Caco-2 (cell line): ENCODE measurements at regions of chr2 and their contacts with region 1.

Region 1: GRCh38 chr2:150097891-150098595 is 389.4 kb downstream of the RND3 start:
- DNase-seq: peak in 1 of 2 experiments; percentile 17
- H3K4me3 ChIP-seq: no peak overlapping the region
- H3K4me3 Mint-ChIP-seq: no peak overlapping the region
- H3K27ac Mint-ChIP-seq: peak overlapping the region; percentile 59
- H3K4me1 ChIP-seq: peaks cover 21% of the 10 kb centered on the region
- H3K4me1 Mint-ChIP-seq: peaks cover 23% of the 10 kb centered on the region
- H3K27me3 ChIP-seq: no peaks in the 10 kb centered on the region
- H3K27me3 Mint-ChIP-seq: no peaks in the 10 kb centered on the region
- CTCF ChIP-seq: peak in 1 of 2 experiments; percentile 19

Region 2: GRCh38 chr2:149989447-149990063 is 108.5 kb before region 1 on chr2:
- CTCF ChIA-PET with region 1: no interaction called
- POLR2A ChIA-PET with region 1: no interaction called
- intact Hi-C with region 1: loop called (anchors 2 kb)
- DNase-seq: peak in 1 of 2 experiments; percentile 50
- H3K4me3 ChIP-seq: no peak overlapping the region
- H3K4me3 Mint-ChIP-seq: peak overlapping the region; percentile 42
- H3K27ac Mint-ChIP-seq: peak overlapping the region; percentile 87
- H3K4me1 ChIP-seq: peaks cover 47% of the 10 kb centered on the region
- H3K4me1 Mint-ChIP-seq: peaks cover 51% of the 10 kb centered on the region
- H3K27me3 ChIP-seq: no peaks in the 10 kb centered on the region
- H3K27me3 Mint-ChIP-seq: no peaks in the 10 kb centered on the region
- CTCF ChIP-seq: no peak

Region 3: GRCh38 chr2:150212722-150213171 is 114.7 kb after region 1 on chr2:
- CTCF ChIA-PET with region 1: no interaction called
- POLR2A ChIA-PET with region 1: no interaction called
- intact Hi-C with region 1: loop called (anchors 5 kb)
- DNase-seq: no peak
- H3K4me3 ChIP-seq: no peak overlapping the region
- H3K4me3 Mint-ChIP-seq: no peak overlapping the region
- H3K27ac Mint-ChIP-seq: peak overlapping the region; percentile 43
- H3K4me1 ChIP-seq: peaks cover 48% of the 10 kb centered on the region
- H3K4me1 Mint-ChIP-seq: peaks cover 21% of the 10 kb centered on the region
- H3K27me3 ChIP-seq: no peaks in the 10 kb centered on the region
- H3K27me3 Mint-ChIP-seq: no peaks in the 10 kb centered on the region
- CTCF ChIP-seq: no peak

Region 4: DNA sequence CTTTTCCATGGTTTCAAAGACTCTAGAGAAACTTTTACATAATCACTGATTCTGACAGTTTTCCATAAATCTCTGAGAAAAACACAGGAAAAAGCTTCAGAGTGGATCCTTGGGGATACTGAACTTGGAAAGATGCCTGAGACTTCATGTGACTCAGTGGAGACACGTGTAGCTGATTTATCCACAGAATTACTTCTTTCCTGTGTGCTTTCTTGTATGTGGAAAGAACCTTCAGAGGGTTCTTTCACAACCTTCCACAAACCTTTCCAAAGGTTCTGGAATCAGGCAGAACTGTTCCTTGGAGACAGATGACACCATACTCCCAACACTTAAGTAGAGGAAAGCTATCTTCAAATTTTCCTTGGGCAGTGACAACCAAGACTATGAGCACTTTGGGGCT is 182.2 kb after region 1 on chr2:
- CTCF ChIA-PET with region 1: no interaction called
- POLR2A ChIA-PET with region 1: no interaction called
- intact Hi-C with region 1: no loop called
- DNase-seq: no peak
- H3K4me3 ChIP-seq: no peak overlapping the region
- H3K4me3 Mint-ChIP-seq: no peak overlapping the region
- H3K27ac Mint-ChIP-seq: no peak overlapping the region
- H3K4me1 ChIP-seq: no peaks in the 10 kb centered on the region
- H3K4me1 Mint-ChIP-seq: no peaks in the 10 kb centered on the region
- H3K27me3 ChIP-seq: no peaks in the 10 kb centered on the region
- H3K27me3 Mint-ChIP-seq: no peaks in the 10 kb centered on the region
- CTCF ChIP-seq: no peak

Region 5: GRCh38 chr2:150303281-150303680 is 205.2 kb after region 1 on chr2:
- CTCF ChIA-PET with region 1: no interaction called
- POLR2A ChIA-PET with region 1: no interaction called
- intact Hi-C with region 1: loop called (anchors 10 kb)
- DNase-seq: no peak
- H3K4me3 ChIP-seq: no peak overlapping the region
- H3K4me3 Mint-ChIP-seq: no peak overlapping the region
- H3K27ac Mint-ChIP-seq: no peak overlapping the region
- H3K4me1 ChIP-seq: no peaks in the 10 kb centered on the region
- H3K4me1 Mint-ChIP-seq: peaks cover under 1% of the 10 kb centered on the region
- H3K27me3 ChIP-seq: no peaks in the 10 kb centered on the region
- H3K27me3 Mint-ChIP-seq: no peaks in the 10 kb centered on the region
- CTCF ChIP-seq: no peak